OCI-LY7 (cell line): ENCODE measurements at regions of chr3 and their contacts with region 1.

Region 1: DNA sequence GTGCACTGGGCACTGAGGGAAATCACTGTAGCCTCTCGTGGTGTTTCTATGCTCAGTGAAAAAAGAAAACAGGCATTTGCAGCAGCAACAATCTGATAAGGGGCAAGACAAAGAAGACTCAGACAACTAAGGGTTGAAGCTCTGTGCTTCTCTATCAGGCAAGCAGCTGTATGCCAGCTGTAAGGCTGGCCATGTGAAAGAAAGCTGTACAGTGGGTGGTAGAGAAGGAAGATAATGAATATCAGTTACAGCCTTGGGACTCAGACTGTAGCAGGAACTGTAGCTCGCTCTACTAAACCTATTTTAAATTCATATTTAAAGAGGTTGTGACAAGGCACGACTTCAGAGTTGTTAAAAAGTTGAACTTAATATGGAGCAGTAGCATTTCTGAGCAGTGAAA is 76.3 kb downstream of the VGLL3 start:
- DNase-seq: no peak
- H3K4me3 ChIP-seq: no peak overlapping the region
- H3K27ac ChIP-seq: no peak overlapping the region
- H3K4me1 ChIP-seq: no peaks in the 10 kb centered on the region
- CTCF ChIP-seq: no peak

Region 2: GRCh38 chr3:86711634-86712033 is 203.0 kb before region 1 on chr3:
- CTCF ChIA-PET with region 1: no interaction called
- POLR2A ChIA-PET with region 1: no interaction called
- intact Hi-C with region 1: loop called (anchors 10 kb)
- DNase-seq: no peak
- H3K4me3 ChIP-seq: no peak overlapping the region
- H3K27ac ChIP-seq: no peak overlapping the region
- H3K4me1 ChIP-seq: no peaks in the 10 kb centered on the region
- CTCF ChIP-seq: no peak

Region 3: DNA sequence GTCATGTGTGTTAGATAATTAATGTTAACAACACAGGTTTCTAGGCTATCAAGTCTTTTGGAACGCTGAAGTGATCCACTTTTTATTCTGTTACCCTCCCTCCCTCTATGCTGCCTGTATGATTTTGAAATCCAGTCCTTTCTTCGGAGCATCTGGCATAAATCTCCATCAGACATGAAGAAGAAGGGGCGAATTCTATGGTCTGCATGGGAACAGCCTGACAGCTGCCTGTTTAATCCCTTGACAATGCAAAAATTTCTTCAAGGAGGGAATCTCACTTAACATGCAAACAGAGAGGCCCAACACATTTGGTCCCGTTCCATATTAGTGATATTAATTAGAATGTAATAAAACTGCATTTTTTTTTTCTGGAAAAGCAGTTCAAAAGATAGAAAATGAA is 68.9 kb before region 1 on chr3:
- CTCF ChIA-PET with region 1: no interaction called
- POLR2A ChIA-PET with region 1: no interaction called
- intact Hi-C with region 1: no loop called
- DNase-seq: no peak
- H3K4me3 ChIP-seq: no peak overlapping the region
- H3K27ac ChIP-seq: no peak overlapping the region
- H3K4me1 ChIP-seq: no peaks in the 10 kb centered on the region
- CTCF ChIP-seq: no peak